ENCODE measurements at regions of chr11 and their contacts with region 1.

Region 1: DNA sequence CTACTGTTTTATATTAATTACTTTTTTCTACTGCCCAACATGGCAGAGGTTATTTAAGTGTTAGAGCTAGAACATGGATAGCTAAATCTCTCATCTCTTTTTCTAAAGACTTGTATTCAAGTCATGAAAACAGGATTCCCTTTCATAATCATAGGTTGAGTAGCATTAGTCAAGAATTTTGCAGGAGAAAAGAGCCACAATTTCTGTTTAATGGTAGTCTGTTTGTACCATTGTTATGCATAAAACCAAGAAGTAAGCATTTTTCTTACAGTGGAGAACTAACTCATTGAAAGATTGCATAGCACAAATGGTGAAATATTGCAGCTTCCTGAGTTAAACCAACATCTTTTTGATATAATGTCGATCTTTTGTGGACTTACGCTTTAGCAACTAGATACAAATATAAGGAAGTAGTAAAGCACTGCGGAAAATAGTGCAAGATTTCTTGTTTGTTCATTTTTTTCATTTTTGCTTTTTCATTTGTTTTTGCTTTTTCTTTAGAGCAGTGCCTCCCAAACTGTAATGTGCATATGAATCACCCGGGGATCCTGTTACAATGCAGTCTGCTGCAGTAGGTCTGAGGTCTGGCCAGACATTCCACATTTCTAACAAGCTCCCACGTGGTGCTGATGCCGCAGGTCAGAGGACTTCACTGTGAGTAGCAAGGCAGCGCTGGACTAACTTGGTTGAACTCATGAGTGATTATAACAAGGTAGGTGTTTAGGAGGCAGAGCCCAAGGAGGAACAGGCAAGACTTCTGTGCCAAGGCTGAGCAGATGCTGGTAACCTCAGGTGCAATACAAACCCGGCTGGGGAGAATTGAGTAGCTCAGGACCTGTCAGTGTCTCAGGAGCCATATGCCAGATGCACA is 4.6 kb downstream of the ETS1 start:
- DNase-seq: no peak
- H3K4me3 Mint-ChIP-seq: no peak overlapping the region
- H3K27ac Mint-ChIP-seq: no peak overlapping the region
- H3K4me1 Mint-ChIP-seq: peaks cover 26% of the 10 kb centered on the region
- H3K27me3 Mint-ChIP-seq: peaks cover 15% of the 10 kb centered on the region

Region 2: GRCh38 chr11:128551611-128552335 is 31.0 kb before region 1 on chr11:
- intact Hi-C with region 1: loop called (anchors 1 kb)
- DNase-seq: no peak
- H3K4me3 Mint-ChIP-seq: no peak overlapping the region
- H3K27ac Mint-ChIP-seq: peak overlapping the region; percentile 73
- H3K4me1 Mint-ChIP-seq: peaks cover 42% of the 10 kb centered on the region
- H3K27me3 Mint-ChIP-seq: no peaks in the 10 kb centered on the region

Region 3: GRCh38 chr11:128599729-128600128 is 17.0 kb after region 1 on chr11:
- intact Hi-C with region 1: loop called (anchors 1 kb)
- DNase-seq: no peak
- H3K4me3 Mint-ChIP-seq: no peak overlapping the region
- H3K27ac Mint-ChIP-seq: peak overlapping the region; percentile 62
- H3K4me1 Mint-ChIP-seq: peaks cover 36% of the 10 kb centered on the region
- H3K27me3 Mint-ChIP-seq: peaks cover 2% of the 10 kb centered on the region

Region 4: DNA sequence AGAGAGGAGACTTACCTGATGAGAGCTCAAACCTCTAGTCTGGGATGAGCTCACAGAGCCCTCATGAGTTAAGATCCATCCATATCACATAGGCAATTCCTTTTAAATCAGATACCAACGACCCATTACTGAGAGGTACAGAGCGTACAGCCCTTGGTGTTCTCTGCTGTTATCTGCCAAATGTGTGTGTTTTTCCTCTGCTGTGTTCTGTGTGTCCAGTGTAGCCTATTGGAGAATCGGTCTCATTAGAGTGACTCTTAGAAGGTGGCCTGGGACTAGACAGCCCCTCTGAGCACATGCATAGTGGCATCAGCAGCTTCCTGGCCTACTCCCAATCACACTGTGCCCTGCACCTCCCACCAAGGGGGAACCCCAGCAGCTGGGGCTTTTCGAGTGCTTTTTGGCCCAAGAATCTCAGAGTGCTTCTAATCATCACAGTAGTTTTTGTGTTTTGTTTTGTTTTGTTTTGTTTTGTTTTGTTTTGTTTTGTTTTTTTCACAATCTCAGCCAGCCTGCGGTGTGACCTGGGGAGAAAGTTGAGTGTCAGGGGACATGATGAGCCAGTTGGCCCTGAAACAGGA is 334.5 kb after region 1 on chr11:
- intact Hi-C with region 1: no loop called
- DNase-seq: no peak
- H3K4me3 Mint-ChIP-seq: no peak overlapping the region
- H3K27ac Mint-ChIP-seq: no peak overlapping the region
- H3K4me1 Mint-ChIP-seq: no peaks in the 10 kb centered on the region
- H3K27me3 Mint-ChIP-seq: peaks cover 2% of the 10 kb centered on the region

Measured in activated T-helper 2 cell treated with anti-CD3 and anti-CD28 coated beads, Interferon-gamma antibody, Interleukin-2, Interleukin-4, amounts not matched to agents 10 μg/mL and 5 μg/mL and 100 μg/mL, durations not matched to agents 14 hours and 24 hours and 36 hours (primary cell).